Kidney (tissue), 22 donors: ENCODE measurements at regions of chr1 and their contacts with region 1.

Region 1: DNA sequence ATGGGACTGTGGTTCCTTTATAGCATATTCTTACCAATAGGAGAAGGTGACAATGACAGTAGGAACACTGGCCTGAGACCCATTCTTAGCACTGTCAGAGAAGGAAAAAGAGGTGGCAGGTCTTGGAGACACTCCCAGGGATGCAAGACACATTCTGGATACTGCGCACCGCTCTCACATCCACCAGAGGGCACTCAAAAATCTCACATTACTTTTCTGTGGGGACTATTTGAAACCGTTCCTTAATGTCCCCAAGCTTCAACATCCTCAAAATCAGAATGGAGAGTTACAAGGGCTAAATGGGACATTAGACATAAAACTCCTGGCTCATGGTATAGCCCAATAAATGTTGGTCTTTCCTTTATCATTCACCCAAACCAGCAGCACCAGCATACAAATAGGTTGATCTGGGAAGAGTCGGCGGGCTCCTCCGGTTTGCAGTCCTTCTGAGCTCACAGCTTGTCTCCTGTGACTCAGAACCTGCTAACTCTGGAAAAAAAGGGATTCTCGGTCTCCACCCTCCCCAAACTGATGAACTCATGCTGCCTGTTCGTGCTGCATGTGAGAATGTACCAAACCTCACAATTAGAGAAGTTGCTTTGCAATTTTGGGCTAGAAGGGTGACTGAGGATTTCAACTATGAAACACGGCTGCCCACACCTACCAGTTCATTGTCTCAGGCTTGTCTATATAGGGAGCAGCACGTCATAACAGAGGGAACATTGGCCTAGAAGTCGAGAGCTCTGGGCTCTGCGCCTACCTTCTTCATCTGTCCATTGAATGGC is 40.2 kb downstream of the IL12RB2 start:
- DNase-seq: peak in 3 of 5 donors; percentile 37 to 80 (median 72)
- H3K4me3 ChIP-seq: no peak overlapping the region
- H3K27ac ChIP-seq: no peak overlapping the region
- H3K4me1 ChIP-seq: no peaks in the 10 kb centered on the region
- H3K27me3 ChIP-seq: no peaks in the 10 kb centered on the region
- CTCF ChIP-seq: peak; percentile 76

Region 2: DNA sequence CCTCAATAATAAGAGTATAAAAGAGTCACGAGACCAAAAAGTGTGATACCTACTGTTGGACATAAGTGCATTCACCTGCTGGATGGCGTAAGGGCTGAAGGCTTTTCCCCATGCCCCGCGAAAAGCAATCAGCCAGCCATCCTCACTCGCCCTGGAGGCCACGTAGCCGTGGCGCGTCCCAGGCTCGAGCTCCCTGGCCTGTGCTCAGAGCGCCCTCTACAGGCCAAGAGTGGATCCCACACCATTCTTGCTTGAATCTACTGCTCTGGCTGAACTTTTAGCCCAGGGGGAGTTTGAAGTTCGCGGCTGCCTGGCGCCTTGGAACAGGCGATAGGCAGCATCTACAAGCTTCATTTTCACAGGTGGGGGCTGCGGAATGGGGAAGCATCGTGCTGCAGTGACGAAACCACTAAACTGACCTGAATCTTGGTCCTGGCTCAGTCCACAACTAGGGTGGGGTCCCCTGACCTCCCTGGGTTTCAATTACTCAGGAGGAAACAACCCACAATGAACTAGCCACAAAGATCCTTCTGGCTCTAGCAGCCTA is 152.6 kb after region 1 on chr1:
- intact Hi-C with region 1: loop called (anchors 5 kb)
- DNase-seq: peak; percentile 91 to 96 (median 92)
- H3K4me3 ChIP-seq: no peak overlapping the region
- H3K27ac ChIP-seq: no peak overlapping the region
- H3K4me1 ChIP-seq: peaks cover 0 to 4% (median 0%) of the 10 kb centered on the region in 3 donors
- H3K27me3 ChIP-seq: no peaks in the 10 kb centered on the region
- CTCF ChIP-seq: peak; percentile 95